ENCODE measurements at regions of chr10 and their contacts with region 1.

Region 1: GRCh38 chr10:91797874-91798648 is at the start of gene TNKS2:
- DNase-seq: peak; percentile 93
- H3K4me3 Mint-ChIP-seq: peak within 1 kb of the TSS; percentile 87
- H3K27ac Mint-ChIP-seq: peak within 1 kb of the TSS; percentile 96
- H3K4me1 Mint-ChIP-seq: peaks cover 36% of the 10 kb centered on the region
- H3K27me3 Mint-ChIP-seq: peaks cover 19% of the 10 kb centered on the region
- CTCF ChIP-seq: no peak
- total RNA-seq, gene TNKS2: 48.3 and 50.3 TPM in 2 replicates

Region 2: GRCh38 chr10:91672021-91672608 is 125.9 kb before region 1 on chr10:
- CTCF ChIA-PET with region 1: no interaction called
- POLR2A ChIA-PET with region 1: no interaction called
- intact Hi-C with region 1: no loop called
- DNase-seq: peak; percentile 27
- H3K4me3 Mint-ChIP-seq: no peak overlapping the region
- H3K27ac Mint-ChIP-seq: peak overlapping the region; percentile 47
- H3K4me1 Mint-ChIP-seq: peaks cover 7% of the 10 kb centered on the region
- H3K27me3 Mint-ChIP-seq: no peaks in the 10 kb centered on the region
- CTCF ChIP-seq: no peak

Region 3: GRCh38 chr10:91758303-91759146 is 39.5 kb before region 1 on chr10:
- CTCF ChIA-PET with region 1: interaction called, 11 read pairs
- POLR2A ChIA-PET with region 1: interaction called, 32 read pairs
- intact Hi-C with region 1: loop called (anchors 2 kb)
- DNase-seq: peak; percentile 52
- H3K4me3 Mint-ChIP-seq: no peak overlapping the region
- H3K27ac Mint-ChIP-seq: no peak overlapping the region
- H3K4me1 Mint-ChIP-seq: no peaks in the 10 kb centered on the region
- H3K27me3 Mint-ChIP-seq: peaks cover 54% of the 10 kb centered on the region
- CTCF ChIP-seq: peak; percentile 57

Region 4: GRCh38 chr10:91774566-91774965 is 23.5 kb before region 1 on chr10:
- CTCF ChIA-PET with region 1: interaction called, 3 read pairs
- POLR2A ChIA-PET with region 1: interaction called, 19 read pairs
- intact Hi-C with region 1: no loop called
- DNase-seq: no peak
- H3K4me3 Mint-ChIP-seq: no peak overlapping the region
- H3K27ac Mint-ChIP-seq: no peak overlapping the region
- H3K4me1 Mint-ChIP-seq: no peaks in the 10 kb centered on the region
- H3K27me3 Mint-ChIP-seq: peaks cover 36% of the 10 kb centered on the region
- CTCF ChIP-seq: no peak

Region 5: GRCh38 chr10:91782539-91782938 is 15.5 kb before region 1 on chr10:
- CTCF ChIA-PET with region 1: interaction called, 3 read pairs
- POLR2A ChIA-PET with region 1: interaction called, 43 read pairs
- intact Hi-C with region 1: no loop called
- DNase-seq: no peak
- H3K4me3 Mint-ChIP-seq: no peak overlapping the region
- H3K27ac Mint-ChIP-seq: no peak overlapping the region
- H3K4me1 Mint-ChIP-seq: peaks cover 4% of the 10 kb centered on the region
- H3K27me3 Mint-ChIP-seq: peaks cover 36% of the 10 kb centered on the region
- CTCF ChIP-seq: no peak

Region 6: GRCh38 chr10:91813251-91813650 is 15.2 kb after region 1 on chr10:
- CTCF ChIA-PET with region 1: interaction called, 4 read pairs
- POLR2A ChIA-PET with region 1: interaction called, 33 read pairs
- intact Hi-C with region 1: no loop called
- DNase-seq: no peak
- H3K4me3 Mint-ChIP-seq: no peak overlapping the region
- H3K27ac Mint-ChIP-seq: no peak overlapping the region
- H3K4me1 Mint-ChIP-seq: peaks cover 5% of the 10 kb centered on the region
- H3K27me3 Mint-ChIP-seq: no peaks in the 10 kb centered on the region
- CTCF ChIP-seq: no peak

Region 7: GRCh38 chr10:91820144-91820543 is 22.1 kb after region 1 on chr10:
- CTCF ChIA-PET with region 1: no interaction called
- POLR2A ChIA-PET with region 1: interaction called, 33 read pairs
- intact Hi-C with region 1: no loop called
- DNase-seq: peak; percentile 44
- H3K4me3 Mint-ChIP-seq: no peak overlapping the region
- H3K27ac Mint-ChIP-seq: no peak overlapping the region
- H3K4me1 Mint-ChIP-seq: no peaks in the 10 kb centered on the region
- H3K27me3 Mint-ChIP-seq: no peaks in the 10 kb centered on the region
- CTCF ChIP-seq: no peak

Region 8: DNA sequence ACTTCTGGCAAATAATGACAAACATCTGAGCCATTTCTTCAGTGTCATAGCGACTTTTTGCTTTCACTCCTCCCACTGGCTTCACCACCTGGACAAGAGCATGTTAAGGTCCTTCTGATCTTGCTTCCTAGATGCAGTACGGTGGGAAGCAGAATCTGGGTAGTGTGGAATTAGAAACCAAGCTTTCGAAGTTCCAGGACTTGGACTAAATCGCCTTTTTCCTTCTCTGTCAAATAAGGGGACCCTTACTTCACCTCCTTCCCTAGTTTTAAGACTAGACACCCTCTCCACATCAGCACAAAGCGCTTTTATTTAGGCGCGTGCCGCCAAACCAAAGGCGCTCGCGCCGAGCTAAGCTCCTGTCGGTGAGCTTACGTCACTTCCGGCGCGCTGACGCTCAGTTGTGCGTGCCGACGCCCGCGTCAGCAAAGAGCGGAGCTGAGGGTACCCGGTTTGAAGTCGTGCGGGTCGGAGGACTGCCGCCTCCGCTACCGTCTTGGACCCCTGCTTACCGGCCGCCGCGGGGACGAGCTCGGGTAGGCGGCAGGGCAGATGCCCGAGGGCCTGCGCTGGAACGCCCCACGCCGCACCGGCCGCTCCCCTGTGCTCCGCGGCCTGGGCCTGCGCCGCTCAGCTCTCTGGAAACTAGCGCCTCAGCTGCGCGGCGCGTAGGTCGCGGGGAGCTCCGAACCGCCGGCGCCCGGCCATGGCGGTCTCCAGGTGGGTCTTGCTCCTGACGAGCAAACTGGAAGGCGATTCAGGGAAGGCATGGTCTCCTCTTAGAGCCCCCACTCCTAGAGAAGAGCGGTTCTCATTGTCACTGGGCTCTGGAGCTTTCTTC is 125.5 kb after region 1 on chr10 and contains the start of gene BTAF1:
- CTCF ChIA-PET with region 1: no interaction called
- POLR2A ChIA-PET with region 1: interaction called, 95 read pairs
- intact Hi-C with region 1: no loop called
- DNase-seq: peak; percentile 90
- H3K4me3 Mint-ChIP-seq: peak within 1 kb of the TSS; percentile 84
- H3K27ac Mint-ChIP-seq: peak within 1 kb of the TSS; percentile 98
- H3K4me1 Mint-ChIP-seq: peaks cover 17% of the 10 kb centered on the region
- H3K27me3 Mint-ChIP-seq: no peaks in the 10 kb centered on the region
- CTCF ChIP-seq: no peak
- total RNA-seq, gene BTAF1: 35.5 and 37.0 TPM in 2 replicates

Measured in MCF 10A (cell line).